Calu3 (cell line): ENCODE measurements at regions of chr2 and their contacts with region 1.

Region 1: GRCh38 chr2:211745295-211746097 is 793.1 kb downstream of the ERBB4 start:
- DNase-seq: peak; percentile 68
- H3K4me3 Mint-ChIP-seq: no peak overlapping the region
- H3K27ac Mint-ChIP-seq: no peak overlapping the region
- H3K4me1 Mint-ChIP-seq: no peaks in the 10 kb centered on the region
- H3K27me3 Mint-ChIP-seq: no peaks in the 10 kb centered on the region
- CTCF ChIP-seq: peak; percentile 88

Region 2: GRCh38 chr2:211085056-211085680 is 660.3 kb before region 1 on chr2:
- CTCF ChIA-PET with region 1: no interaction called
- intact Hi-C with region 1: loop called (anchors 10 kb)
- DNase-seq: peak; percentile 62
- H3K4me3 Mint-ChIP-seq: no peak overlapping the region
- H3K27ac Mint-ChIP-seq: peak overlapping the region; percentile 56
- H3K4me1 Mint-ChIP-seq: peaks cover 22% of the 10 kb centered on the region
- H3K27me3 Mint-ChIP-seq: no peaks in the 10 kb centered on the region
- CTCF ChIP-seq: peak; percentile 54

Region 3: GRCh38 chr2:212005085-212005671 is 259.7 kb after region 1 on chr2:
- CTCF ChIA-PET with region 1: no interaction called
- intact Hi-C with region 1: loop called (anchors 5 kb)
- DNase-seq: peak; percentile 57
- H3K4me3 Mint-ChIP-seq: no peak overlapping the region
- H3K27ac Mint-ChIP-seq: peak overlapping the region; percentile 25
- H3K4me1 Mint-ChIP-seq: no peaks in the 10 kb centered on the region
- H3K27me3 Mint-ChIP-seq: no peaks in the 10 kb centered on the region
- CTCF ChIP-seq: peak; percentile 58

Region 4: DNA sequence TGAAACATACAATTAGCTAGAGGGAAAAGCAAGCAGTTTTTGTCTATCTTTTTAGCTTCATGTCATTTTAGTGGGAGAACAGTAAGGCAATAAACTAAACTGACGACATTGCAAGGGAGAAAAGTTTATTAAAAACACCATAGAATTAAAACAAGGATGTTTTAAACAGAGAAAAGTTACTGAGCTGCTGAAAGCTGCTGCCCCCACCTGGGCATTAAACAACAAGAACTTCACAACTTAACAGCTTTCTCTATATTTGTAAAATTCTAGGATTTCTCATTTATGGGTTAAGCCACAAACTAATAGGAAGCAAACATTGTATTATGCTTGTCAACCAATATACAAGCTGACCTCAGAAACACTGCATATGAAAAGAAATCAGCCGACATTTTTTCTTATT is 504.0 kb after region 1 on chr2:
- CTCF ChIA-PET with region 1: interaction called, 6 read pairs
- intact Hi-C with region 1: loop called (anchors 5 kb)
- DNase-seq: peak; percentile 7
- H3K4me3 Mint-ChIP-seq: no peak overlapping the region
- H3K27ac Mint-ChIP-seq: no peak overlapping the region
- H3K4me1 Mint-ChIP-seq: no peaks in the 10 kb centered on the region
- H3K27me3 Mint-ChIP-seq: no peaks in the 10 kb centered on the region
- CTCF ChIP-seq: no peak

Region 5: DNA sequence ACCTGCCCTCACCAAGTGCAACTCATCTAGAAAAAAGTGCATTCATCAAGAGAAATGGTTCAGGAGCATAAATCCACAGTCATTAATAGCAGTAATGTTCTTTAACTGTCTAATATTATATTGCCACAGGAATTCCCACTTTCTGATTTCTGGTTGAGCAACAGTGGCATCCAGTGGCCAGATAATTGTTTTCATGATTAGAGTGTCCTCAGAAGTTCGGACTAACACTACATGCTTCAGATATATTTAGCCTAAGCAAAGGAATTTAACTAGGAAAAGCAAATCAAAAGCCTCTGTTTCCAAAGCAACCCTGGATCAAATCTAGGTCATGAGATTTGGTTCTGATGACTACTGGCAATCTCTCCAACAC is 802.9 kb after region 1 on chr2:
- CTCF ChIA-PET with region 1: interaction called, 3 read pairs
- intact Hi-C with region 1: loop called (anchors 5 kb)
- DNase-seq: peak; percentile 39
- H3K4me3 Mint-ChIP-seq: no peak overlapping the region
- H3K27ac Mint-ChIP-seq: no peak overlapping the region
- H3K4me1 Mint-ChIP-seq: no peaks in the 10 kb centered on the region
- H3K27me3 Mint-ChIP-seq: no peaks in the 10 kb centered on the region
- CTCF ChIP-seq: peak; percentile 37